Activated T-helper 1 cell treated with anti-CD3 and anti-CD28 coated beads, Interleukin-12 subunit alpha, Interleukin-12 subunit beta, Interleukin-2, Interleukin-4 antibody, amounts not matched to agents 30 ng/mL and 10 ng/mL and 1 ng/mL, durations not matched to agents 14 hours and 24 hours and 36 hours (primary cell): ENCODE measurements at regions of chr7 and their contacts with region 1.

Region 1: DNA sequence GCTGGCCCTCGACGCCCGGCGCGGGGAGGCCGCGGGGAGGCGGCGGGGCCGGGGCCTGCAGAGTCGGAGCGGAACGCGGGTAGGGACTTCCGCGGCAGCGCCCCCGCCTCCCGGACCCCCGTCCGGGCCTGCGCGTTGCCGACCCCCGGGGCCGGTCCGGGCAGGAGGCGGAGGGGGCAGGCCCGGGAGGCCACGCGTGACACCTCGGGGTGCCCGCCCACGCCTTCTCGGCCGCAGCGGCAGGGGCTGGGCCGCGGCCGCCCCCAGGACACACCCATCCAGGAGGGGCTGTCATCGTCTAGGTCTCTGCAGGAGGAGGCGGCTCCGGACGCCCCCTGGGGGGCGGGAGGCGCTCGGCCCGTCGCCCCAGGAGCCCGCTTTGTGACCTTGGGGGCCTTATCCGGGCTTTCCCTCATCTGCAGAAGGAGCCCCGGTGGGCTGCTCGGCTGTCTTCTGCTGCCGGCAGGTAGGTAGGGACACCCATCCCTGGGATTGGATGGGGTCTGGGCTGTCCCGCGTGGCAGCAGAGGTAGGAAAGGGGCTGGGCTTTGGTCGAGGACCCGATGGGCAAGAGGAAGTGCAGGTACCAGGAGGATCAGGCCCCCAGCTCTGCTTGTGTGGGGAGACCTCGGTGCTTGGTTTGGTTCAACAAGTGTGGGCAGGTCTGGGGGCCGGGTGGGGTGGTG is 569 bp downstream of the ZNF316 start:
- DNase-seq: peak; percentile 48
- H3K4me3 Mint-ChIP-seq: peak overlapping the region; percentile 84
- H3K27ac Mint-ChIP-seq: peak overlapping the region; percentile 87
- H3K4me1 Mint-ChIP-seq: peaks cover 19% of the 10 kb centered on the region
- H3K27me3 Mint-ChIP-seq: no peaks in the 10 kb centered on the region

Region 2: GRCh38 chr7:6530626-6531491 is 106.8 kb before region 1 on chr7:
- intact Hi-C with region 1: no loop called
- DNase-seq: no peak
- H3K4me3 Mint-ChIP-seq: peak overlapping the region; percentile 68
- H3K27ac Mint-ChIP-seq: no peak overlapping the region
- H3K4me1 Mint-ChIP-seq: peaks cover 7% of the 10 kb centered on the region
- H3K27me3 Mint-ChIP-seq: peaks cover 51% of the 10 kb centered on the region

Region 3: GRCh38 chr7:6589829-6590644 is 47.6 kb before region 1 on chr7 and contains the start of gene INTS15:
- intact Hi-C with region 1: loop called (anchors 2 kb)
- DNase-seq: peak; percentile 78
- H3K4me3 Mint-ChIP-seq: peak within 1 kb of the TSS; percentile 88
- H3K27ac Mint-ChIP-seq: peak within 1 kb of the TSS; percentile 85
- H3K4me1 Mint-ChIP-seq: peaks cover 8% of the 10 kb centered on the region
- H3K27me3 Mint-ChIP-seq: no peaks in the 10 kb centered on the region
- total RNA-seq, gene INTS15: 44.6 and 46.6 TPM in 2 replicates

Region 4: GRCh38 chr7:6607651-6608051 is 30.0 kb before region 1 on chr7:
- intact Hi-C with region 1: no loop called
- DNase-seq: no peak
- H3K4me3 Mint-ChIP-seq: no peak overlapping the region
- H3K27ac Mint-ChIP-seq: no peak overlapping the region
- H3K4me1 Mint-ChIP-seq: no peaks in the 10 kb centered on the region
- H3K27me3 Mint-ChIP-seq: peaks cover 2% of the 10 kb centered on the region